ENCODE measurements at regions of chr5 and their contacts with region 1.

Region 1: GRCh38 chr5:131634996-131635754 is at the start of gene RAPGEF6:
- DNase-seq: peak; percentile 100
- ATAC-seq: peak; percentile 90
- H3K4me3 ChIP-seq: peak within 1 kb of the TSS; percentile 93
- H3K27ac ChIP-seq: peak within 1 kb of the TSS; percentile 98
- H3K4me1 ChIP-seq: peaks cover 20% of the 10 kb centered on the region
- H3K27me3 ChIP-seq: no peaks in the 10 kb centered on the region
- CTCF ChIP-seq: peak in 1 of 3 experiments; percentile 17; a peak in 1 of 6 replicates
- EP300 ChIP-seq: peak; percentile 49 to 80; a peak in 2 of 4 replicates
- POLR2A ChIP-seq: peak; percentile 90
- RAD21 ChIP-seq: 0 out of 2 replicates have a peak, but pooled peaks have one; percentile 7
- polyA plus RNA-seq, gene RAPGEF6: 2.9 to 4.9 TPM

Region 2: GRCh38 chr5:131170540-131171275 is 464.5 kb before region 1 on chr5 and contains the start of gene LYRM7:
- CTCF ChIA-PET with region 1: no interaction called
- POLR2A ChIA-PET with region 1: no interaction called
- RAD21 ChIA-PET with region 1: no interaction called
- SMC1A ChIA-PET with region 1: no interaction called
- in situ Hi-C with region 1: no loop called
- intact Hi-C with region 1: loop called (anchors 5 kb)
- DNase-seq: peak; percentile 98
- ATAC-seq: peak; percentile 98
- H3K4me3 ChIP-seq: peak within 1 kb of the TSS; percentile 86
- H3K27ac ChIP-seq: peak within 1 kb of the TSS; percentile 65
- H3K4me1 ChIP-seq: peaks cover 3% of the 10 kb centered on the region
- H3K27me3 ChIP-seq: no peaks in the 10 kb centered on the region
- CTCF ChIP-seq: no peak
- EP300 ChIP-seq: no peak
- POLR2A ChIP-seq: peak; percentile 82
- RAD21 ChIP-seq: 0 out of 2 replicates have a peak, but pooled peaks have one; percentile 4
- polyA plus RNA-seq, gene LYRM7: 25.8 to 45.7 TPM

Region 3: DNA sequence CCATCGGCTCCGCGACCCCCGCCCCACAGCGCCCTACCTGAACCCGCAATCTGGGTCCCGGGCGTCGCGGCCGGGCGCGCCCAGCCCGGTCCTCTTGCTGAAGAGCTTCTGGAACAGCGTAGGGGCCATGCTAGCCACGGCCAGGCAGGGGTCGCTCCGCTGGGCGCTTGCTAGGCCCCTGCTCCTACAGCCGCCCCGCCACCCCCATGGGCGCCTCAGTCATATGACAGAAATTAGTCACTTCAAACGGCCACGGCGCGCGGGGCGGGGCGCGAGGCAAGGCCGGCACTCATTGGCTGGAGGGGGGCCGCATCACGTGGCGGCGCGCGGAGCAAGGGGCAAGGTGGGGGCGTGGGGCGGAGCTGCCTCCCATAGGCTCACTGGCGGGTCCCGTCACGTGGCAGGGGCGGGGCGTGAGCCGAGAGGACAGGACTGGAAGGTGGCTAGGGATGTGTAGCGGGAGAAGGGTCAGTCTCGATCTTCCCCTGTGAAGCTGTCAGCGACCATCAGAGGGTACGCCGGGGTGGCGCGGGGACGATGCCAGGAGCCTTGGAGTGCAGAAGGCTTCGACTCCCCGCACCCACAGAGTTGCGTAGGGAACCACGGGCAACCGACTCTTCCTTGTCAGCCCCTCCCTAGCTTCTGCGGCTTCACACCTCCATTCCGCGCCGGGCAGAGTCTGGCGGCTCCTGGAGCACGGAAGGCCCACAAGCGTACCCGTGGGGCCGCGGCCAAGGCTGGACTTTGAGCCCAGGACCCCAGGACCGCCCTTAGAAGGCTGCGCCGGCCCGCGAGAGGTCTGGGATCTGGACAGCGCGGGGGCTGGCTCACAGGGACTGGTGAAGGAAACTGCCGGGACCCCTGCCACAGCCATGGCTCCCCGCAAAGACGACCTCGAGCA is 161.9 kb after region 1 on chr5 and contains the start of gene FNIP1:
- CTCF ChIA-PET with region 1: no interaction called
- POLR2A ChIA-PET with region 1: interaction called, 9 read pairs
- RAD21 ChIA-PET with region 1: interaction called, 8 read pairs
- SMC1A ChIA-PET with region 1: interaction called, 4 read pairs
- in situ Hi-C with region 1: no loop called
- intact Hi-C with region 1: loop called (anchors 1 kb)
- DNase-seq: peak; percentile 86
- ATAC-seq: peak; percentile 93
- H3K4me3 ChIP-seq: peak within 1 kb of the TSS; percentile 86
- H3K27ac ChIP-seq: peak within 1 kb of the TSS; percentile 93
- H3K4me1 ChIP-seq: peaks cover 6% of the 10 kb centered on the region
- H3K27me3 ChIP-seq: no peaks in the 10 kb centered on the region
- CTCF ChIP-seq: no peak
- EP300 ChIP-seq: 0 out of 4 replicates have a peak, but pooled peaks of 1 of the 2 experiments have one; percentile 29
- POLR2A ChIP-seq: peak; percentile 97
- RAD21 ChIP-seq: no peak
- polyA plus RNA-seq, gene FNIP1: 4.3 to 7.0 TPM